ENCODE measurements at regions of chr19 and their contacts with region 1.

Region 1: DNA sequence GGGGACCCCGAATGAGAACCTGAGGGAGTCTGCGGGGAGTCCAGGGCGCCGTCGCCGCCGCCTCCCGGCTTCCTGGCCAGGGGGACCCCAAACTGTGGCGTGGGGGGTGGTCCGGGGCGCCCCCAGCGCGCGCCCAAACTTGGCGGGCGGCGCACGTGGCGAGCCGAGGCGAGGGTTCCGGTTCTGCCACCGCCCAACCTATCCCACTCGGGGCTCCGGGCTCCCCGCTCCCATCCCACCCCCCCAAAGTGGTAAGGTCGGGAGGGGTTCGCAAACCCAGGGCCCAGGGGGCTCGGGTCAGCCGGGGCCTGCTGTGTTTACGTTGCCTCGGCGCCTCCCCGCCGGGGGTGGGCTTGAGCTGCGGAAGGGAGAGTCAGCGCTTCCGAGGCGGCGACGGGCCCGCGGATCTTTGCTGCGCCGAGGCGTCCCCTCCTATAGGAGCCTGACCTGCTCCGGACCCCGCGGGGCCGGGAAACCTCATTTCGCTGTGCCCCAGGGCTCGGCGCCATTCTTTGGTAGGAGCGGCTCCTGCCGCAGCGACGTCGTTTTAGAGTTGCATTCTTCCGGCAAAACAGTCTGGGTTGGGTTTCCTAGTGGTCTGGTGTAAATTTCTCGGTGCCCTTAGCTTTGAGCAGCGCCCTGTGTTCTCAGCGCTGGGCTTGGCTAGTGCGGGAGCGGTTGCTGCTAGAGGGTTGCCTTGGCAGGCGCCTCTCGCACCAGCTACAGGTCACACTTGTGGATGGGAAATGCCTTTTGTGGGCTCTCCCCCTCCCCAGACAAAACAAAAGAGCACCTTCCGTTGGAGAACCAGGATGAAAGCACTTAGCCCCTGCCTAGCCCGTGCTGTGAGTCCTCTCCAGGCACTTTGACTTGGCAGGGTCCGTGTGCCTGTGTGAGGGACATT is 1.2 kb downstream of the DAZAP1 start:
- DNase-seq: peak; percentile 30
- H3K4me3 Mint-ChIP-seq: peak overlapping the region; percentile 86
- H3K27ac Mint-ChIP-seq: peak overlapping the region; percentile 85
- H3K4me1 Mint-ChIP-seq: peaks cover 26% of the 10 kb centered on the region
- H3K27me3 Mint-ChIP-seq: no peaks in the 10 kb centered on the region
- CTCF ChIP-seq: no peak

Region 2: DNA sequence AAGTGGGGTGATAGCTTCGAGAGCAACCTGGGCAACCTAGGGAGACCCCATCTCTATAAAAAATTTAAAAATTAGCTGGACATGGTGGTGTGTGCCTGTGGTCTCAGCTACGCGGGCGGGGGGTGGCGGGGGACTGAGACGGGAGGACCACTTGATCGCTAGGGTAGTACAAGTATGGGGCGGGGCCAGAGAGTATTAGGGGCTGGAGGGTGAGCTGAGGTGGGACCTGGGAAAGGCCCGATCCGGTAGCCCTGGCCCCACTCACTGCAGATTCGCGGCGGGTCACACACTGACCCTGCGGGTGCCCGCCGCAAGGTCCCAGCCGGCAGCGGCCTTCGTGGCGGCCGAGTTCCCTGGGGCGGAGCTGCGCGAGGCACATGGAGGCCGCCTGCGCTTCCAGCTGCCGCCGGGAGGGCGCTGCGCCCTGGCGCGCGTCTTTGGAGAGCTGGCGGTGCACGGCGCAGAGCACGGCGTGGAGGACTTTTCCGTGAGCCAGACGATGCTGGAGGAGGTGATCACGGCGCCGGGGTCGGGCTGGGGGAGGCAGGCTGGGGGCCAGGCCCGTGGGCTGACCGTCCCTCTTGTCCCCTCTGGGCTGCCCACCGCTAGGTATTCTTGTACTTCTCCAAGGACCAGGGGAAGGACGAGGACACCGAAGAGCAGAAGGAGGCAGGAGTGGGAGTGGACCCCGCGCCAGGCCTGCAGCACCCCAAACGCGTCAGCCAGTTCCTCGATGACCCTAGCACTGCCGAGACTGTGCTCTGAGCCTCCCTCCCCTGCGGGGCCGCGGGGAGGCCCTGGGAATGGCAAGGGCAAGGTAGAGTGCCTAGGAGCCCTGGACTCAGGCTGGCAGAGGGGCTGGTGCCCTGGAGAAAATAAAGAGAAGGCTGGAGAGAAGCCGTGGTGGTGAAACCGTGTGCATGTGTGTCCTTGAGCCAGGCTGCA is 343.6 kb before region 1 on chr19:
- CTCF ChIA-PET with region 1: interaction called, 11 read pairs
- intact Hi-C with region 1: no loop called
- DNase-seq: peak; percentile 76
- H3K4me3 Mint-ChIP-seq: peak overlapping the region; percentile 58
- H3K27ac Mint-ChIP-seq: no peak overlapping the region
- H3K4me1 Mint-ChIP-seq: peaks cover 10% of the 10 kb centered on the region
- H3K27me3 Mint-ChIP-seq: no peaks in the 10 kb centered on the region
- CTCF ChIP-seq: peak; percentile 68

Measured in Calu3 (cell line).